ENCODE measurements at regions of chr5 and their contacts with region 1.

Region 1: DNA sequence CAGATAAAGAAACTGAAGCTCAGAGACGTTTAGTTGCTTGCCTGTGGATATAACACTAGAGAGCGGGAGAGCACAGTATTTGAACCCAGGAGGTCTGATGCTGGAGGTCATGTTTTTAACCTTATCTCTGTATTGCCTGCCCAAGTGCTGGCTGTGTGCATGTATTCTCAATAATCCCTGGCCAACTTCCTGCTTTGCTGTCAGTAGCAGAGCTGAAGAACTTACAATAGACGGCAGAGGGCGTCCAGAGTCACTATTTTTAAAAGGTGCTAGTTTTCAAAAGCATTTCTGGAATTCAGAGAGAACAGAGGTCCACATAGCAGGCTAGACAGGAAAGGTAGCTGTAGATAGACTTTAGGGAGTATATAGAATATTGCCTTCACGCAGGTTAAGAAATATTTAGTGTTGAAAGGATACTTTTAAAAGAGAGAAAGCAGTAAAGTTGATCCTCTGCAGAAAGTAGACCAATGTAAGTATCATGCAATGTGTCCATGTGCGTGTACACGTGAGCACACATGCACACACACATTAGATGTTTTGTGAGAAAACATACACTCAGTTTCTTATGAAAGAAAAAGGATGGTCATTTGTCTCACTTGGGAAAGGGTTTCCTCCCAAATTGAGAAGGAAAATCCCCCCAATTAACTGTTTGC is 46.3 kb downstream of the PTCD2 start:
- DNase-seq: peak; percentile 41
- ATAC-seq: peak; percentile 94

Region 2: DNA sequence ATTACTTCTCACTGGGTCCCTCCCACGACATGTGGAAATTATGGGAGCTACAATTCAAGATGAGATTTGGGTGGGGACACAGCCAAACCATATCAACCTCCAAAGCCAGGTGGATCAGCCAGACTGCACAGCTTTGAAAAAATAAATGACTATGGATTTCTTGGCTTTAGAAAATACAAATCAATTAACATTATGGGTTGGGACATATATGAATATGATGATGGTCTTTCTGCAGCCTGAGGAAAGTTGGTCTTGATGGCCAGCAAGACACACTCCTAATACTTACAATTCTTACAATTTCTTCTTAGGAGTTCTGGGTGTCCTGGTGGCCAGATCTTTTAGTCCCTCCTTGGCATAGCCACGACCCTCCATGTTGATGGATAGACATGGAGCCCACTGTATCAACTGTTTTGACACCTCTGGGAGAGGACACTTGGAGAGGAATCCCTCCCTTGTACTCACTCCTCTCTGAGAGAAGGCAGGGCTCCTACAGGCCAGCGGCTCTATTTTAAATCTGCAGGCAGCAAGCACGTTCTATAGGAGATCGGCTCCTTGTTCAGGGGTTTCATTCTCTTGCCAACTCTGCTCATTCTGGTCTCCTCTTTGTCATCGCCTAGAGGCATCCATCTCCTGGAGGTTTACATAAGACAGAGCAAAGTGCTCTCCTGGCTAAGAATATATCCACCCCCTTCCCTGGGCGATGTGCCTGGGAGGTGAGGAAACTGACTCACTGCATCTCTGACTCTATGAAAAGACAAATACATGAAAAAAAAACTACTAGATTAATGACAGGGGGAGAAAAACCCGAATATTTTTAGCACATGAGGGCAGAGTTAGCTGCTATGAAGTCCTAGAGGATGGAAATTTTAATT is 501.5 kb before region 1 on chr5:
- intact Hi-C with region 1: no loop called
- DNase-seq: no peak
- ATAC-seq: peak; percentile 86

Region 3: DNA sequence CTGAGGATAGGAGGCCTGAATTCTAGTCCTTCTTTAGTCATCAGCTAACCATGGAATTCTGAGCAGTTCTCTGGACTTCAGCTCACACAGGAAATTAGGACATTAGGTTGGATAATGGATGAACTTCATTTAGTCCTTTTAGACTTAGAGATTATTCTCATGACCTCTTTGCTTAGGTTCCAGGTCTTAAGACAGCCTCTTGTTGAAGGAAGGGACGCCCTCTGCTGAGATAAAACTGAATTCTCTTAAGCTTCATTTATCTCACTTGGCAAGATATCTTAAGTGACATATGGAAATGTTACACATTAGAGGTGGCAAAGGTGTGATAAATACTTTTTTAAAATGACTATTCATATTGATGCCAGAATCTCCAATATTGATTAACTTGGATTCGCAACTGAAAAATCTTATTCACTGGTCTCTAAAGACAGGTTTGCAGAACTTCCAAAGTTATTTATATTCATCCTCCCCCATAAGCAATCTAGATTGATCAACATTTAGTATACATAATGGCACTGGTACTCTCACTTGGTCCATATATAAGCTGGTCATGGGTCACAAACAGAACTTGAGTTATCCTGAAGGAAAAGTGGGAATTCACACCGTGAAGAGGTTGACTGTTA is 157.6 kb after region 1 on chr5:
- intact Hi-C with region 1: loop called (anchors 1 kb)
- DNase-seq: no peak
- ATAC-seq: peak; percentile 84

Region 4: DNA sequence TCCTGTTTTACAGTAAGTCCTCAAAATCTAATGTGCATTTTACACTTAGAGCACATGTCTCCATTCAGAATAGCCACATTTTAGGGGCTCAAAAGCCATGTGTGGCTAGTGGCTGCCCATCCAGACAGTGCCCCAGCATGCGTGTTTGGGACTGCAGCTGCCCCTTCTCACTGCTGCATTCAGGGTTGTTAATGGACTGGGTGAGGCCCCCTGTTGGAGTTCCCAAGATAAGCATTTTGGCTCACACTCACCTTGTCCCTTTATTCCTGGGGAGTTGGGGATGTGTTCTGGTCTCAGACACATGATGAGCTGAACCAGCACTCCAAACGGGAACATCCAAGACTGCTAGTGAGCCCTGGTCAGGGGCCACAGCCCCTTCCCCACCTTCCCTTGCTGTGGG is 162.9 kb after region 1 on chr5:
- intact Hi-C with region 1: loop called (anchors 1 kb)
- DNase-seq: no peak
- ATAC-seq: no peak